Right ventricle myocardium superior (tissue), 1 donor: ENCODE measurements at regions of chr7 and their contacts with region 1.

Region 1: GRCh38 chr7:137169282-137169698 is 174.2 kb downstream of the PTN start:
- DNase-seq: peak; percentile 53
- ATAC-seq: peak; percentile 92

Region 2: GRCh38 chr7:137454246-137454724 is 285.0 kb after region 1 on chr7:
- intact Hi-C with region 1: loop called (anchors 10 kb)
- DNase-seq: no peak
- ATAC-seq: peak; percentile 84

Region 3: GRCh38 chr7:137579913-137580640 is 410.8 kb after region 1 on chr7:
- intact Hi-C with region 1: loop called (anchors 10 kb)
- DNase-seq: no peak
- ATAC-seq: no peak